Adrenal gland (tissue), 19 donors: ENCODE measurements at regions of chr12 and their contacts with region 1.

Region 1: DNA sequence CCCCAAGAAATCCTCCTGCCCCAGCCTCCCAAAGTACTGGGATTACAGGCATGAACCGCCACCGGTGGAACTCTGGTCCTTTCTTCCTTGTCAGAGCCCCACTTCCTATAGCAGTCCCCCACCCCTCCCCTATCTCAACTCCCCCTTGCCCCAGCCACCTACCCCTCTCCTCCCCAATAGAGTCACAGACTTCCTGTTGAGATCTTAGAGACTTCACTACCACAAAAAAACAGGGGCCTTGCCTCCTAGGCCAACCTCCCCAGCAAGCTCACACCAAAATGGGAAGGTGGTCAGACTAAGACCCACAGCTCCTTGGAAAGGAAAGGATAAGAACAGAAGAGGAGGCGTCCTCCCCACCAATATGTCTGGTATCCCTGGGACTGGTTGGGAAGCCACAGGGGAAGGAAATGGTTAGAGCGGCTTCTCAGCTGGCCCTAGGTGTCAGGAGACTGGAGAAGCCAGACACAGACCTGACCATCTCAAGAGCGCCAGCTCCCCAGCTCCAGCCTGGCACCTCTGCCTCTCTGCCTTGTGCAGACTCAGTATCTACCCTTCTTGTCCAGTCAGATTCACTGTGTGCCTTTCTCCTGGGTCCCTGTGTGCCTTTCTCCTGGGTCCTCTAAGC is 8.5 kb downstream of the ITGB7 start:
- DNase-seq: no peak
- H3K4me3 ChIP-seq: no peak overlapping the region
- H3K27ac ChIP-seq: no peak overlapping the region
- H3K4me1 ChIP-seq: peaks cover 4 to 12% of the 10 kb centered on the region in 2 donors
- H3K27me3 ChIP-seq: no peaks in the 10 kb centered on the region
- CTCF ChIP-seq: no peak
- POLR2A ChIP-seq: no peak

Region 2: GRCh38 chr12:53160000-53160399 is 38.6 kb before region 1 on chr12:
- intact Hi-C with region 1: loop called (anchors 2 to 5 kb)
- DNase-seq: no peak
- H3K4me3 ChIP-seq: no peak overlapping the region
- H3K27ac ChIP-seq: no peak overlapping the region
- H3K4me1 ChIP-seq: peaks cover 0 to 3% of the 10 kb centered on the region in 2 donors
- H3K27me3 ChIP-seq: no peaks in the 10 kb centered on the region
- CTCF ChIP-seq: no peak
- POLR2A ChIP-seq: no peak